Gastrocnemius medialis (tissue), 4 donors: ENCODE measurements at regions of chr5 and their contacts with region 1.

Region 1: GRCh38 chr5:38433160-38433861 is 123.1 kb downstream of the LIFR start:
- DNase-seq: no peak
- ATAC-seq: peak; percentile 45 to 50
- H3K4me3 ChIP-seq: no peak overlapping the region
- H3K27ac ChIP-seq: peak overlapping the region in 2 of 4 donors; percentile 5 to 16
- H3K4me1 ChIP-seq: peaks cover 7% of the 10 kb centered on the region in 2 donors
- H3K27me3 ChIP-seq: no peaks in the 10 kb centered on the region
- CTCF ChIP-seq: no peak
- POLR2A ChIP-seq: no peak

Region 2: GRCh38 chr5:37735649-37736347 is 697.5 kb before region 1 on chr5:
- in situ Hi-C with region 1: no loop called
- intact Hi-C with region 1: no loop called
- DNase-seq: peak; percentile 69 to 74
- ATAC-seq: peak; percentile 89 to 90
- H3K4me3 ChIP-seq: no peak overlapping the region
- H3K27ac ChIP-seq: peak overlapping the region; percentile 60 to 71 (median 71)
- H3K4me1 ChIP-seq: peaks cover 29 to 40% of the 10 kb centered on the region in 2 donors
- H3K27me3 ChIP-seq: no peaks in the 10 kb centered on the region
- CTCF ChIP-seq: no peak
- POLR2A ChIP-seq: no peak

Region 3: DNA sequence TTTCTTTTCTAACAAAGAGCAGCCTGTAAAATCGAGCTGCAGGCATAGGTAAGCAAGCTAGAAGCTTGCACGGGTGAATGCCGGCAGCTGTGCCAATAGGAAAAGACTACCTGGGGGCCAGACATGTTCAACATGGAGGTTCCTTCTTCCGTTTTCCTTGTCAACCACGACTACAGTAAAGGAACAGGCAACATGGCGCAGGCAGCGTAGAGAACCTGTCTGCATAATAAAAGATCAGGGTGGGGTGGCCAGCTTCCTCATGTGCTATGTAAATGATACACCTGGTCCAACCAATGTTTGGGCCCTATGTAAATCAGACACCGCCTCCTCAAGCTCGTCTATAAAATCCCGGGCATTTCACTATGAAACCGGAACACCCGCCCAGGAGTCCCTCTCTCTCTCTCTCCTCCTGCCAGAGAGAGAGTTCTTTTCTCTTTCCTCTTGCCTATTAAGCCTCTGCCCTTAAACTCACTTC is 226.9 kb after region 1 on chr5:
- in situ Hi-C with region 1: loop called in 3 of 4 experiments (anchors 5 to 10 kb)
- intact Hi-C with region 1: no loop called
- DNase-seq: peak; percentile 58 to 81
- ATAC-seq: peak; percentile 90 to 96
- H3K4me3 ChIP-seq: peak overlapping the region; percentile 18 to 36 (median 34)
- H3K27ac ChIP-seq: peak overlapping the region; percentile 45 to 82 (median 72)
- H3K4me1 ChIP-seq: peaks cover 33 to 34% of the 10 kb centered on the region in 2 donors
- H3K27me3 ChIP-seq: no peaks in the 10 kb centered on the region
- CTCF ChIP-seq: no peak
- POLR2A ChIP-seq: peak; percentile 47 to 64

Region 4: DNA sequence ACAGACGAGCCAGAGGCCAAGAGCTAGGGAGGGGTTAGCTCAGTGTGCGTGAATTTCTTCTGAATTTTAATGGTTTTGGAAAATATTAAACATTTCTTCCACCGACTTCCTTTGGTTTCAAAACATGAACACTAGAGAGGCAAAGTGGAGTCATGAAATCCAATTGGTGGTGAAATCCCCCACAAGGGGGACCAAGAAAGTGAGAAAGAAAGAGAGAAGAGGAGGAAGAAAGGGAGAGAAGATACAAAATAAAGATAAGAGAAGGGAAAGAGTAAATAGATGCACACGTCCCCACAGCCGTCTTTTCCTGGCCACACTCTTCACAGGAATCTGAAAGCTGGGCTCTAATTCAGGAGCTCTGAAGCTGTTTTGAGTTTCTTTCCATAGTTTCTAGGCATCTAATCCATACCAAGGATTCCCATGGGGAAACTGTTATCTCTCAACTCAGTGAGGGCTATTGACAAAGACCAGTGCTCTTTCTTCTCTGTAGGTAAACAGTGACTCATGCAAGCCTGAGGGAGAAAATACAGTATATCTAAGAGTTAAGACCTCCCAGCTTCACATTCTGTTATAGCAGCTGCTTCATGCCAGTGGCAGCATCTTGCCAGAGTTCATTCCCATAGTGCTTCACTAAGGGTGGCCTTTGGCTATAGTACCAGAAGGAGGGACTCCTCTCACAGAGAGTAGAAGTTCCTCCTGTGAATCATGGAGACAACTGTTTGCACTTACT is 238.9 kb after region 1 on chr5:
- in situ Hi-C with region 1: loop called in 3 of 4 experiments (anchors 5 to 10 kb)
- intact Hi-C with region 1: no loop called
- DNase-seq: no peak
- ATAC-seq: no peak
- H3K4me3 ChIP-seq: no peak overlapping the region
- H3K27ac ChIP-seq: no peak overlapping the region
- H3K4me1 ChIP-seq: peaks cover 0 to 5% of the 10 kb centered on the region in 2 donors
- H3K27me3 ChIP-seq: no peaks in the 10 kb centered on the region
- CTCF ChIP-seq: no peak
- POLR2A ChIP-seq: no peak

Region 5: DNA sequence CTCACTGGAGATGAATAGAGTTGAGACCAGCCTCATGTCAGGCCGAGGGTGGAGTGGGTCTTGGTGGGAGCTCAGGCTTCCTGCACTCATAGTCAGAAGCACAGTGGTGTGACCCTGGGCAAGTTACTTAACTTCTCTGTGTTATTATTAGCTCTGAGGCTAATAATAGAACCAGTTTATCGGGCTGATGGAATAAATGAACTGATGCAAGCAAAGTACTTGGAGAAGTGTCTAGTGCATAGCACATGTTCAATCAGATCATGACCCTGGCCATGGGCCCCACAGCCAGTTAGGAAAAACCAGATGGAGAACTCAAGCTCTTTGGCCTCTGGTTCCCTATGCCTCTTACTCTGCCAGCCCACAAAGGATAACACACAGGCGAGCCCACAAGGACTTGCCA is 367.2 kb after region 1 on chr5:
- in situ Hi-C with region 1: loop called in 1 of 4 experiments (anchors 5 kb)
- intact Hi-C with region 1: no loop called
- DNase-seq: no peak
- ATAC-seq: peak; percentile 11 to 43
- H3K4me3 ChIP-seq: no peak overlapping the region
- H3K27ac ChIP-seq: peak overlapping the region; percentile 44 to 61 (median 56)
- H3K4me1 ChIP-seq: peaks cover 10 to 25% of the 10 kb centered on the region in 2 donors
- H3K27me3 ChIP-seq: no peaks in the 10 kb centered on the region
- CTCF ChIP-seq: no peak
- POLR2A ChIP-seq: no peak